ENCODE measurements at regions of chr7 and their contacts with region 1.

Region 1: GRCh38 chr7:128209229-128210035 is 31.6 kb upstream of the LEP start:
- DNase-seq: peak; percentile 76
- ATAC-seq: peak; percentile 55
- H3K4me3 Mint-ChIP-seq: no peak overlapping the region
- H3K27ac Mint-ChIP-seq: no peak overlapping the region
- H3K4me1 Mint-ChIP-seq: peaks cover 25% of the 10 kb centered on the region
- H3K27me3 Mint-ChIP-seq: peaks cover 23% of the 10 kb centered on the region
- CTCF ChIP-seq: peak; percentile 95

Region 2: DNA sequence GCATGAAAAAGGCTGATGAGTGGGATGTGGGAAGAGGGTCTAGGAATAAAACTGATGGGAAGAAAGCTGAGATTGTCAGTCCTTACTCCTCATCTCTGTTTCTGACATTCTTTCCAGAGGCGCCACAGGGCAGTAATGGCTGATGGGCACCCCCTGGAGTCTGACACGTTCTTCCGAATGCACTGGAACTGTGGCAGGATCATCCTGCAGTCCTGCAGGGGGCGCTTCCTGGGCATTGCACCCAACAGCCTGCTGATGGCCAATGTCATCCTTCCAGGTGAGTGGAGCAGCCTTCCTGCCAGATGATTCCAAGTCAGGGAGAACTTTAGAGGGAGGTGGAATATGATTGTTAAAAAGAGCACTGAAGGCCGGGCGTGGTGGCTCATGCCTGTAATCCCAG is 611.1 kb before region 1 on chr7:
- CTCF ChIA-PET with region 1: no interaction called
- POLR2A ChIA-PET with region 1: no interaction called
- DNase-seq: peak; percentile 80
- ATAC-seq: peak; percentile 91
- H3K4me3 Mint-ChIP-seq: no peak overlapping the region
- H3K27ac Mint-ChIP-seq: no peak overlapping the region
- H3K4me1 Mint-ChIP-seq: peaks cover 19% of the 10 kb centered on the region
- H3K27me3 Mint-ChIP-seq: peaks cover 8% of the 10 kb centered on the region; the same call in 1 of the 2 replicates
- CTCF ChIP-seq: peak; percentile 77

Region 3: DNA sequence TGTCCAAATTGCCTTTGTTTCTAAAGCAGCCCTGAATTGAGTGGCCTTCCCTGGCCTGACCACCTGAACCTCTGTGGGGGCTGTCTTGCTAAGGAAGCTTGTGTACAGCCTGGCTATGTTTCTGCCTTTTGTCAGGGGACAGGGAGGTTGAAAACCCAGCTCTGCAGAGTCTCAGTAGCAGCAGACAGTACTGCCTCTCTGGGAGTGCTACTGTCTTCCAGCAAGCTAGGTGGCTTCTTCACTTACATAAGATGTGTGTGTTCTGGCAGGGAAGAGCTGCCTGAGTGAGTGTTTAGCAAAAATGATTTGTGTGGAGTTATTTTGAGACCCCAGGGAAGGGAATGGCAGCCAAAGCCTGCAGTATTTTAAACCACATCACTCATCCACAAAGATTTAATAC is 235.6 kb before region 1 on chr7:
- CTCF ChIA-PET with region 1: no interaction called
- POLR2A ChIA-PET with region 1: no interaction called
- DNase-seq: no peak
- ATAC-seq: no peak
- H3K4me3 Mint-ChIP-seq: no peak overlapping the region
- H3K27ac Mint-ChIP-seq: no peak overlapping the region
- H3K4me1 Mint-ChIP-seq: peaks cover 11% of the 10 kb centered on the region
- H3K27me3 Mint-ChIP-seq: no peaks in the 10 kb centered on the region
- CTCF ChIP-seq: no peak

Region 4: DNA sequence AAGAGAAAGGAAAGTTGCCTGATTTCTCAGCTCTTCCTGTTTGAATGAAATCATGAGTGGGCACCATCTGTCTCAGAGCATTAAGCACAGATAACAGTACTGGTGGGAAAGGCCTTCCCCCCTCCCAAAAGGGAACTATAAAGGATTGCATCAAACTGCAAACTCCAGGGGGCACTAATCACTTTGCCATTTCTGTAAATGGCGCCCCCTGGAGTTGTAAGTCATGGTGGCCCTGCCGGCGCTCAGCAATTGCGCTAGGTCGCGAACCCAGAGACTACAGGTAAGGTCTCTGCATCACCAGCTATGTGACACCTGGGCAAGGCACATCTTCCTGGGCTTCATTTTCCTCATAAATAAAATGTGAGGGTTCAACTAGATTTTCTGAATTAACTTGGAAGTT is 189.3 kb before region 1 on chr7:
- CTCF ChIA-PET with region 1: interaction called, 21 read pairs
- POLR2A ChIA-PET with region 1: no interaction called
- DNase-seq: peak; percentile 74
- ATAC-seq: peak; percentile 38
- H3K4me3 Mint-ChIP-seq: no peak overlapping the region
- H3K27ac Mint-ChIP-seq: no peak overlapping the region
- H3K4me1 Mint-ChIP-seq: peaks cover 78% of the 10 kb centered on the region
- H3K27me3 Mint-ChIP-seq: no peaks in the 10 kb centered on the region
- CTCF ChIP-seq: peak; percentile 83

Region 5: DNA sequence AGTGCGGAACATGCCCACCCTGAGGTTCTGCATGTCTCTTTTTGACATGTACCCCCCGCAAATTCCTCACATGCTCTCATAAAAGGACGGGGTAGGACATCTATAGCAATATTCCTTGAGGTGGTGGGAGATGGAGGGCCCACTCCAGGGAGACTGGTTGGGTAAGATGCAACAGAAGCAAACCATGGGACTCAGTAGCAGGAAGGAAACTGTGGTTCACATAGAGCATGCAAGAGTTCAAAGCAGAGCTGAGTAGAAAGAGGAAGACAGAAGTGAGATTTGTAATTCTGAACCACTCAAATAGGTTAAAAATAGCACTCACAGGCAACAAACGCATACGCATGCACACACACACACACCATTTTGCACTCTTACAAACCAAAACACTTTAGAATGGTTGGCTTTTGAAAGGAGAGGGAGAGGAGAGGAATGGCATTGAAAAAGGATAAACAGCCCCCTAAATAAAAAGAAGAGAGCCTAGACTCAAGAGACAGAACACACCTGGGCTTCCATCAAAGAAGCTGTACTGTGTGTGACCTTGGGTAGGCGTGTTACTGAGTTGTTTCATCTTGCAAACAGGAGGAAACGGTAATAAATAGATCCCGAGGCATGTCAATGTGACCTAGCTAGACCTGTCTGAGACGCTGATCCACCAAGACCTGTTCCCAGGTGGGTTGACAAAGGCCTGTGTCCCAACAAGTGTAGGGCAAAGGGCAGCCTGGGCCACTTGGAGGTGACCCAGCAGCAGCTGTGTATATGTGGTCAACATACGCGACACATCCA is 100.6 kb before region 1 on chr7:
- CTCF ChIA-PET with region 1: interaction called, 133 read pairs
- POLR2A ChIA-PET with region 1: no interaction called
- DNase-seq: no peak
- ATAC-seq: no peak
- H3K4me3 Mint-ChIP-seq: no peak overlapping the region
- H3K27ac Mint-ChIP-seq: no peak overlapping the region
- H3K4me1 Mint-ChIP-seq: peaks cover 3% of the 10 kb centered on the region; the same call in 1 of the 2 replicates
- H3K27me3 Mint-ChIP-seq: peaks cover 49% of the 10 kb centered on the region
- CTCF ChIP-seq: no peak

Region 6: GRCh38 chr7:128135515-128136214 is 73.8 kb before region 1 on chr7:
- CTCF ChIA-PET with region 1: interaction called, 198 read pairs
- POLR2A ChIA-PET with region 1: no interaction called
- DNase-seq: peak; percentile 55
- ATAC-seq: peak; percentile 76
- H3K4me3 Mint-ChIP-seq: peak overlapping the region; percentile 71
- H3K27ac Mint-ChIP-seq: no peak overlapping the region
- H3K4me1 Mint-ChIP-seq: peaks cover 10% of the 10 kb centered on the region
- H3K27me3 Mint-ChIP-seq: peaks cover 74% of the 10 kb centered on the region
- CTCF ChIP-seq: peak; percentile 91

Region 7: GRCh38 chr7:128167042-128167691 is 42.3 kb before region 1 on chr7:
- CTCF ChIA-PET with region 1: interaction called, 112 read pairs
- POLR2A ChIA-PET with region 1: no interaction called
- DNase-seq: peak; percentile 44
- ATAC-seq: peak; percentile 25
- H3K4me3 Mint-ChIP-seq: peak overlapping the region; percentile 78
- H3K27ac Mint-ChIP-seq: no peak overlapping the region
- H3K4me1 Mint-ChIP-seq: peaks cover 31% of the 10 kb centered on the region
- H3K27me3 Mint-ChIP-seq: peaks cover 98% of the 10 kb centered on the region
- CTCF ChIP-seq: no peak

Region 8: GRCh38 chr7:128322040-128322643 is 112.7 kb after region 1 on chr7:
- CTCF ChIA-PET with region 1: interaction called, 10 read pairs
- POLR2A ChIA-PET with region 1: no interaction called
- DNase-seq: no peak
- ATAC-seq: peak; percentile 76
- H3K4me3 Mint-ChIP-seq: no peak overlapping the region
- H3K27ac Mint-ChIP-seq: no peak overlapping the region
- H3K4me1 Mint-ChIP-seq: no peaks in the 10 kb centered on the region
- H3K27me3 Mint-ChIP-seq: no peaks in the 10 kb centered on the region
- CTCF ChIP-seq: no peak

Region 9: DNA sequence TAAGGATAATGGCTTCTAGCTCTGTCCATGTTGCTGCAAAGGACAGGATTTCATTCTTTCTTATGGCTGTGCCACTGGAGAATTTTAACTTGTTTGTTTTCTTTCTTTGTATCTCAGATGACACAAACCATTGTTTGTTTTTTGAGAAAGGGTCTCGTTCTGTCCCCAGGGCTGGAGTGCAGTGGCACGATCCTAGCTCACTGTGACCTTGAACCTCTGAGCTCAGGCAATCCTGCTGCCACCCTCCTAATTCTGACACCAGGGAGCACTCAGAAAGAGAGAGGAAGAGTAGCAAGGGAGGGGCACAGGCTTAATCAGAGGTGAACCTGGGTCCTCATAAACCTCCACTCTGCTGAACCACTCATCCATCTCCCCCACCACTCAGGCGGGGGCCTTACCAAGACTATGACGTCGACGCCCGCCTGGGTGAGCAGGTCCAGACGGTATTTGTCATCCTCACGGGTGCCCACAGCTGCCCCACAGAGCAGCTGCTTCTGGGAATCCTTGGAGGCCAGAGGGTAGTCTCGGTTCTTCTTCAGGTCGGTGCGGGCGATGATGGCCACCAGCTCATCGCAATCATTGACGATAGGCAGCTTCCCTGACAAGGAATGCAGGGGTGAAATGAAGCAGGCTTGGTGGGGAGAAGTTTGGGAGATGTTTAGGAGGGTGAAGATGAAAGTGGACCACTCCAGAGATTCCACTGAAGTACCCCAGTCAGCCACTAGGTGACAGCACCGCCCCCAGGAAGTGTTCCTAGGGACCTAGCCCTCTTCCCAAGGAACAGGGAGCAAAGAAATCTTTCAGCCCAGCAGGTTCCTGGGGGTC is 188.8 kb after region 1 on chr7:
- CTCF ChIA-PET with region 1: no interaction called
- POLR2A ChIA-PET with region 1: no interaction called
- DNase-seq: peak; percentile 84
- ATAC-seq: peak; percentile 90
- H3K4me3 Mint-ChIP-seq: no peak overlapping the region
- H3K27ac Mint-ChIP-seq: no peak overlapping the region
- H3K4me1 Mint-ChIP-seq: no peaks in the 10 kb centered on the region
- H3K27me3 Mint-ChIP-seq: no peaks in the 10 kb centered on the region
- CTCF ChIP-seq: peak; percentile 88

Measured in WTC11 (cell line).